CD8-positive, alpha-beta T cell (primary cell): ENCODE measurements at regions of chr19 and their contacts with region 1.

Region 1: GRCh38 chr19:41951686-41952172 is 7.4 kb downstream of the RABAC1 start:
- DNase-seq: peak; percentile 73 to 97 (median 89)
- ATAC-seq: peak; percentile 88
- H3K4me3 ChIP-seq: no peak overlapping the region
- H3K4me3 Mint-ChIP-seq: no peak overlapping the region
- H3K27ac ChIP-seq: no peak overlapping the region
- H3K27ac Mint-ChIP-seq: peak overlapping the region; percentile 85
- H3K4me1 ChIP-seq: peaks cover 15% of the 10 kb centered on the region
- H3K4me1 Mint-ChIP-seq: peaks cover 31% of the 10 kb centered on the region
- H3K27me3 ChIP-seq: no peaks in the 10 kb centered on the region
- H3K27me3 Mint-ChIP-seq: no peaks in the 10 kb centered on the region
- CTCF ChIP-seq: peak; percentile 96

Region 2: DNA sequence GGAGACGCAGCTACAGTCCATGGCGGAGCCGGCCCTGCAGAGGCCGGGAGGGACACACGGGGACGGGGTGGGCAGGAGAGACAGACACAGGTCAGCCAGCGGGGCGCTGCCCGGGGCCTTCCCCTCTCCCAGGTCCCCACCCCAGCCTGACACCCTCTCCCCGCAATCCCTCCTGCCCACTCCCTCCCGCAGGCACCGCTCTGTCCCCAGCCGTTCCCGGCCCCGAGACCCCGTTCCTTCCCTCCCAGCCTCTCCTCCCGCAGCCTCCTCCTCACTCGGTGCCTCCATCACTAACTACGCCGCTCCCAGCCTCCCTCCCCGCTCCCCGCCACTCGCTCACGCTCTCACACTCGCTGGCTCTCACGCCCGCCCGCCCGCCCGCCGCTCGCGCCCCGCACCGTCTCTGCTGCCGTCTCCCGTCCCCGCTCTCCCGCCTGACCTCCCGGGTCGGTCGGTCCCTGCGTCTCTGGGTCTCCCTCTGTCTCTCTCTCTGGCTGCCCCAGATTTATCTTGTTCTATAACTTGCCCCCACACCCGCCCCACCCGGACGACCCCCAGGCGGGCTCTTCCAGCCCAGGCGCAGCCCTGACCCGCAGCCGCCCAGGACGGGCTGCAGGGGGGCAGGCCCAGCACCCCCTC is 38.7 kb before region 1 on chr19:
- CTCF ChIA-PET with region 1: interaction called, 5 read pairs
- POLR2A ChIA-PET with region 1: interaction called, 5 read pairs
- intact Hi-C with region 1: loop called in 1 of 2 experiments (anchors 5 kb)
- DNase-seq: peak in 3 of 9 experiments; percentile 50 to 56 (median 54)
- ATAC-seq: peak; percentile 15
- H3K4me3 ChIP-seq: no peak overlapping the region
- H3K4me3 Mint-ChIP-seq: peak overlapping the region; percentile 26
- H3K27ac ChIP-seq: no peak overlapping the region
- H3K27ac Mint-ChIP-seq: no peak overlapping the region
- H3K4me1 ChIP-seq: peaks cover 70% of the 10 kb centered on the region
- H3K4me1 Mint-ChIP-seq: peaks cover 43% of the 10 kb centered on the region
- H3K27me3 ChIP-seq: peaks cover 0 to 52% of the 10 kb centered on the region in 2 experiments
- H3K27me3 Mint-ChIP-seq: peaks cover 3% of the 10 kb centered on the region
- CTCF ChIP-seq: no peak

Region 3: DNA sequence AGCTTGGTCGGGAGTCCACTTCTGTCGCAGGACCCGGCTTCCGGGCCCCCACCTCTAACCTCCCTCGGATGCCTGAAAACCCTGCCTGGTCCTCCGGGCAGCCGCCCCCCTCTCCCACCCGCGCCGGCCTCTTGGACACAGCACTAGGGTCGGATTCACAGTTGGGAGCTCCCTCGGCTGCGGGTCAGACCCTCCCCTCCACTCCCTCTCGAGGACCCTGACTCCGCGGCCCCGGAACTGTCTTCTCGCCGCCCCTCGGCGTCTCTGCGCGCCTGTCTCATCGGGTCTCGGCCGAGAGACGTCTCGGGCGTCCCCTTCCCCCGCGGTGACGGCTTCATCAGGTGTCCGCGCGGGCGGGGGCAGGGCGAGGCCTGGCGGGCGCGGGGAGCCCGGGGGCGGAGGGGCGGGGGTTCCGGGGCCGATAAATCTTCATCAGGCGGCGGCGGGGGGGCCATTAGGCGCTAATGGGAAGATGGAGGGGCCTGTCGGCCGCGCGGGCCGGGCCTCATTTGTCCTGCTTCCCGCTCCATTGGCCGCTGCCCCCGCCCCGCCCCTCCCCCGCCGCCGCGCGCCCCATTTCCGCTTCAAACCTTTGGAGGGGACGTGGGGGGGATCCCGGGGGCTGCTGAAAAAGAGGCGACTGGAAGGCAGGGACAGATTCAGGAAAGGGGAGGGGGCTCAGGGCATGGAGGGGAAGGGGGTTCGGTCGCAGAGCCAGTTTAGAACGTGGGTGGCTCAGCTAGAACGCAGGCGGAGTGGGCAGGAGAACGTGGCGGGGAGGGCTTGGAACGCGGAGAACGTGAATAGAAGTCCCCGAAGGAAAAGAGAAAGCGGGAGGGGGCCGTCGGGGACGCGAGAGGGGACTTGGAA is 11.6 kb before region 1 on chr19:
- CTCF ChIA-PET with region 1: interaction called, 14 read pairs
- POLR2A ChIA-PET with region 1: no interaction called
- intact Hi-C with region 1: loop called (anchors 1 to 2 kb)
- DNase-seq: peak in 5 of 9 experiments; percentile 38 to 72 (median 62)
- ATAC-seq: peak; percentile 9
- H3K4me3 ChIP-seq: peak overlapping the region; percentile 36 to 62
- H3K4me3 Mint-ChIP-seq: peak overlapping the region; percentile 86
- H3K27ac ChIP-seq: peak overlapping the region in 1 of 2 experiments; percentile 35
- H3K27ac Mint-ChIP-seq: peak overlapping the region; percentile 96
- H3K4me1 ChIP-seq: peaks cover 39% of the 10 kb centered on the region
- H3K4me1 Mint-ChIP-seq: peaks cover 45% of the 10 kb centered on the region
- H3K27me3 ChIP-seq: peaks cover 0 to 6% of the 10 kb centered on the region in 2 experiments
- H3K27me3 Mint-ChIP-seq: no peaks in the 10 kb centered on the region
- CTCF ChIP-seq: no peak

Region 4: DNA sequence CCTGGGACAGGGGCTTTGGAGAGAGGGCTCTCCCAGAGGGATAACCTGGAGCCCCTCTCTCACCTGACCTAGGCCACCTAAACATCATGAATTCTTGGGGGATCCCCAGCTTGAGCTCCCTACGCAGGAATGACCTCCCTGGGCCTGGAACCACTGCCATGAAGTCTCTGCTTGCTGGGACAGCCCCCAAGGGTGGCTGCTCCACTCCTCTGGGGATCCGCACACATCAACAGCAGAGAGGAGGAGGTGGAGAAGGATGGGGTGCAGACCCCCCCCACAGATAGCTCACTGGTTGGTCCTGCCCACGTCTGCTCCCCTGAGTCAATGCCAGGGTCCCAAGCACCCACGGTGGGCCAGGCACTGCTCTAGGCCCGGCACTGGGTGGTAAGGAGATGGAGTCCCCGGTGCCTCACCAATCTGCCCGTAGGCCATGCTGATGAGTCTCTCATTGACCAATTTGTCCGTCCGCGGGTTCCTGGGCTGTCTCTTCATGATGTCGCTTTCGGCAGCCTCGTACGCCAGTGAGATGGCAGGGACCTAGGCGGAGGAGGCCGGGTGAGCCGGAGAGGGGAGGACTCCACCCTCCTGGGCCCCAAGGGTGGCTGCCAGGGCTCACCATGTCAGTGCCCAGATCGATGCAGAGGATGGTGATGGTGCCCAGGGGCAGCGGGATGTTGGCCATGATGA is 18.2 kb after region 1 on chr19:
- CTCF ChIA-PET with region 1: no interaction called
- POLR2A ChIA-PET with region 1: no interaction called
- intact Hi-C with region 1: no loop called
- DNase-seq: no peak
- ATAC-seq: no peak
- H3K4me3 ChIP-seq: no peak overlapping the region
- H3K4me3 Mint-ChIP-seq: no peak overlapping the region
- H3K27ac ChIP-seq: no peak overlapping the region
- H3K27ac Mint-ChIP-seq: no peak overlapping the region
- H3K4me1 ChIP-seq: no peaks in the 10 kb centered on the region
- H3K4me1 Mint-ChIP-seq: peaks cover 3% of the 10 kb centered on the region
- H3K27me3 ChIP-seq: no peaks in the 10 kb centered on the region
- H3K27me3 Mint-ChIP-seq: no peaks in the 10 kb centered on the region
- CTCF ChIP-seq: no peak